ENCODE measurements at regions of chr3 and their contacts with region 1.

Region 1: GRCh38 chr3:71583566-71584449 is at the start of gene FOXP1:
- DNase-seq: peak; percentile 79
- ATAC-seq: peak; percentile 56
- H3K4me3 Mint-ChIP-seq: peak within 1 kb of the TSS; percentile 84
- H3K27ac Mint-ChIP-seq: peak within 1 kb of the TSS; percentile 99
- H3K4me1 Mint-ChIP-seq: peaks cover 60% of the 10 kb centered on the region
- H3K27me3 Mint-ChIP-seq: no peaks in the 10 kb centered on the region
- CTCF ChIP-seq: no peak
- total RNA-seq, gene FOXP1: 145 to 153 TPM

Region 2: GRCh38 chr3:70550723-70551319 is 1033.0 kb before region 1 on chr3:
- CTCF ChIA-PET with region 1: interaction called, 13 read pairs
- POLR2A ChIA-PET with region 1: no interaction called
- intact Hi-C with region 1: no loop called
- DNase-seq: peak; percentile 85
- ATAC-seq: peak; percentile 86
- H3K4me3 Mint-ChIP-seq: no peak overlapping the region
- H3K27ac Mint-ChIP-seq: no peak overlapping the region
- H3K4me1 Mint-ChIP-seq: no peaks in the 10 kb centered on the region
- H3K27me3 Mint-ChIP-seq: peaks cover 1% of the 10 kb centered on the region
- CTCF ChIP-seq: peak; percentile 72

Region 3: DNA sequence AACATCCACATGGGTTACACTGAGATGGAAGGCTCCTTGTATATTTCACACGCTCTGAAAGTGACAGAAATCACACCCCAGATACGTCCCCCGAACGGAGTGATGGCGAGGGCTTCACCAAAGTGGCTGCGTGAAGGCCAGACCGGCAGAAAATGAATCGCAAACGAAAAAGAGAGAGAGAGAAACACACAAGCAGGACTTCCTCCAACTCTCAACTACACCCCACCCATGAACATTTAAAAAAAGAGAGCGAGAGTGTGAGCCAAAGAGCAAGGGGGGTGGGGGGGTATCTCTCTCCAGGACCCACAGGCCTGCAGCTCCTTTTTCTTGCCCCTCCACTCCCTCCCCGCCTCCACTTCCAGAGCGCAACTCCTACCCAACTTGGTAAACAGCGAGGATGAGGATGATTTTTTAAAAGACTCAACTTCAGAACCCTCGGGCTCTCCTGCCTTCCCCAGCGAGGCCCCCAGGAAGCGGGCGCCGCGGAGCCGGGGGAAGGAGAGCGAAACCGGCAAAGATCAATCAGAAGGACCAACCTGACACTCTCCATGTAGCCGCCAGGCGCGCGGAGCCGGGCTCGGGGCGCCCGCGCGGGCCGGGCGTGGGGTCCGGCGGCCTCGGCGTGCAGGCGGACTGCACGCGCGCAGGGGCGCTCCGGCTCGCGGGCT is 519.4 kb before region 1 on chr3:
- CTCF ChIA-PET with region 1: interaction called, 3 read pairs
- POLR2A ChIA-PET with region 1: interaction called, 49 read pairs
- intact Hi-C with region 1: loop called (anchors 5 kb)
- DNase-seq: peak; percentile 71
- ATAC-seq: peak; percentile 17
- H3K4me3 Mint-ChIP-seq: no peak overlapping the region
- H3K27ac Mint-ChIP-seq: no peak overlapping the region
- H3K4me1 Mint-ChIP-seq: peaks cover 59% of the 10 kb centered on the region
- H3K27me3 Mint-ChIP-seq: no peaks in the 10 kb centered on the region
- CTCF ChIP-seq: no peak

Region 4: GRCh38 chr3:71130471-71131374 is 453.1 kb before region 1 on chr3:
- CTCF ChIA-PET with region 1: interaction called, 4 read pairs
- POLR2A ChIA-PET with region 1: interaction called, 3 read pairs
- intact Hi-C with region 1: loop called (anchors 5 kb)
- DNase-seq: peak; percentile 87
- ATAC-seq: peak; percentile 62
- H3K4me3 Mint-ChIP-seq: peak overlapping the region; percentile 77
- H3K27ac Mint-ChIP-seq: peak overlapping the region; percentile 93
- H3K4me1 Mint-ChIP-seq: peaks cover 68% of the 10 kb centered on the region
- H3K27me3 Mint-ChIP-seq: no peaks in the 10 kb centered on the region
- CTCF ChIP-seq: no peak

Region 5: GRCh38 chr3:71397046-71397445 is 186.8 kb before region 1 on chr3:
- CTCF ChIA-PET with region 1: interaction called, 4 read pairs
- POLR2A ChIA-PET with region 1: interaction called, 15 read pairs
- intact Hi-C with region 1: loop called (anchors 10 kb)
- DNase-seq: peak; percentile 49
- ATAC-seq: no peak
- H3K4me3 Mint-ChIP-seq: peak overlapping the region; percentile 73
- H3K27ac Mint-ChIP-seq: peak overlapping the region; percentile 91
- H3K4me1 Mint-ChIP-seq: peaks cover 80% of the 10 kb centered on the region
- H3K27me3 Mint-ChIP-seq: no peaks in the 10 kb centered on the region
- CTCF ChIP-seq: peak; percentile 43

Region 6: GRCh38 chr3:71456156-71456555 is 127.7 kb before region 1 on chr3:
- CTCF ChIA-PET with region 1: interaction called, 4 read pairs
- POLR2A ChIA-PET with region 1: interaction called, 8 read pairs
- intact Hi-C with region 1: loop called (anchors 5 kb)
- DNase-seq: peak; percentile 30
- ATAC-seq: no peak
- H3K4me3 Mint-ChIP-seq: peak overlapping the region; percentile 68
- H3K27ac Mint-ChIP-seq: peak overlapping the region; percentile 93
- H3K4me1 Mint-ChIP-seq: peaks cover 88% of the 10 kb centered on the region
- H3K27me3 Mint-ChIP-seq: no peaks in the 10 kb centered on the region
- CTCF ChIP-seq: peak; percentile 26

Region 7: DNA sequence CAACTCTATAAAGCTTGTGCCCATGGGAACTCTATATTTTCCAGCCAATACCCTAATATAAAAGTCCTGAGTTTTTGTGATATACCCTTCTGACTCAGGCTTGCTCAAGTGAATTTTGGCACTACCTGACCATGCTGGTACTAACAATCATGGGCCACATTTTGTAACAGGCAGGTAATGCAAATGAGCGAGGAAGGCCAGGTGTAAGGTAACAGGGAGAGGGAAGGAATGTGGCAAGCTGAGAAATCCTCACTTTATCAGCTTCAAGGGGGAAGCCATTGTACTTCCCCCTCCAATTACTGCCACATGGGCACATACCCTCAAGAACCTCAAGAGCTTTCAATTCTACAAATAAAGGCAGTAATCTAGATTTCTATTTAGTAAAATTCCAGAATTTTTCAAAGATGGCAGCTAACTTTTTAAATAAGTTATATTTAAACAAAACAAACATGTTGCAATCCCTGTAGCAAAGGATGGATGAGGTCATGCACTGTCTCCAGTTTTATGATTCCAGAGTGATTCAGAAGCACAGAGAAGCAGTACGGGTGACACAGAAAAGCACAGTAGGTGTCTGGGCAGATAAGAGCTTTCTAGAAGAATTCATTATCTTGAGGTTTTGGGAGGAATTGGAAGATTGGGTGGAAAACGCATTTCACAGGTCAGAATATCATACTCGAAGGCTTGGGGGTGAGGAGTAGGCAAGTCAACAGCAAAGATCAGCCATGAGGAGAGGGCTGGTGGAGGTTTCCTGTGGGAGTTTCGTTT is 87.9 kb before region 1 on chr3:
- CTCF ChIA-PET with region 1: interaction called, 3 read pairs
- POLR2A ChIA-PET with region 1: interaction called, 15 read pairs
- intact Hi-C with region 1: no loop called
- DNase-seq: peak; percentile 59
- ATAC-seq: peak; percentile 63
- H3K4me3 Mint-ChIP-seq: peak overlapping the region; percentile 64
- H3K27ac Mint-ChIP-seq: peak overlapping the region; percentile 95
- H3K4me1 Mint-ChIP-seq: peaks cover 82% of the 10 kb centered on the region
- H3K27me3 Mint-ChIP-seq: no peaks in the 10 kb centered on the region
- CTCF ChIP-seq: no peak

Region 8: GRCh38 chr3:71520161-71521020 is 63.4 kb before region 1 on chr3:
- CTCF ChIA-PET with region 1: no interaction called
- POLR2A ChIA-PET with region 1: no interaction called
- intact Hi-C with region 1: no loop called
- DNase-seq: peak; percentile 35
- ATAC-seq: peak; percentile 47
- H3K4me3 Mint-ChIP-seq: no peak overlapping the region
- H3K27ac Mint-ChIP-seq: no peak overlapping the region
- H3K4me1 Mint-ChIP-seq: peaks cover 10% of the 10 kb centered on the region
- H3K27me3 Mint-ChIP-seq: no peaks in the 10 kb centered on the region
- CTCF ChIP-seq: no peak

Measured in activated CD8-positive, alpha-beta T cell treated with anti-CD3 and anti-CD28 coated beads for 36 hours (primary cell).